ENCODE measurements at regions of chr6 and their contacts with region 1.

Region 1: DNA sequence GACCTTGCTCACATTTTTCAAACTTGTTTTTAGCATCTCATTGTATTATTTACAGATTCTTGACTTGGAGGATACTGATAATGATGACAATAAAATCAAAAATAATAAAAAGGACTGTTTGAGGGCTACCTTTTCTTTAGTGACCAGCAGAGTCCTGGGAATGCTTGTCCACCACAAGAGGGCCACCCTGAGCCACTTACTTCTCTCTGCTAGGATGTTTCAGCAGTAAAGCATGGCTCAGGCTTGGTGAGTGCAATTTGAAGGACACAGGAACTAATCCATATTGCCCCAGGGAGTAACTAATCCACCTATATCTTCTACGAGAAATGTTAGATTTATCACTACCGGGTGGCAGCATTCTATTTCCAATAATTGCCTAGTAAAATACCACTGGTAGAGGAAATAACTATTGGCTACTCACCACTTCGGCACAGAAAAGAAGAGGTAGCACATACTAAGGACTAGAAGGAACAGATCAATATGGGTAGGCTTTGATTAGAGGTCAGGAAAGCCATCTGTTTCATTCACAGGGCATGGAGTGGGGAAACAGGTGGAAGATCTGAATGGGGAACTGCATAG is 5.8 kb upstream of the KIAA0408 start:
- DNase-seq: peak; percentile 74

Region 2: GRCh38 chr6:127446356-127446755 is 18.6 kb before region 1 on chr6:
- CTCF ChIA-PET with region 1: no interaction called
- POLR2A ChIA-PET with region 1: no interaction called
- DNase-seq: no peak

Region 3: GRCh38 chr6:127539272-127539671 is 74.3 kb after region 1 on chr6:
- CTCF ChIA-PET with region 1: interaction called, 12 read pairs
- POLR2A ChIA-PET with region 1: no interaction called
- DNase-seq: no peak

Measured in HEK293T (cell line).